Activated naive CD4-positive, alpha-beta T cell treated with anti-CD3 and anti-CD28 coated beads for 36 hours (primary cell): ENCODE measurements at regions of chr7 and their contacts with region 1.

Region 1: DNA sequence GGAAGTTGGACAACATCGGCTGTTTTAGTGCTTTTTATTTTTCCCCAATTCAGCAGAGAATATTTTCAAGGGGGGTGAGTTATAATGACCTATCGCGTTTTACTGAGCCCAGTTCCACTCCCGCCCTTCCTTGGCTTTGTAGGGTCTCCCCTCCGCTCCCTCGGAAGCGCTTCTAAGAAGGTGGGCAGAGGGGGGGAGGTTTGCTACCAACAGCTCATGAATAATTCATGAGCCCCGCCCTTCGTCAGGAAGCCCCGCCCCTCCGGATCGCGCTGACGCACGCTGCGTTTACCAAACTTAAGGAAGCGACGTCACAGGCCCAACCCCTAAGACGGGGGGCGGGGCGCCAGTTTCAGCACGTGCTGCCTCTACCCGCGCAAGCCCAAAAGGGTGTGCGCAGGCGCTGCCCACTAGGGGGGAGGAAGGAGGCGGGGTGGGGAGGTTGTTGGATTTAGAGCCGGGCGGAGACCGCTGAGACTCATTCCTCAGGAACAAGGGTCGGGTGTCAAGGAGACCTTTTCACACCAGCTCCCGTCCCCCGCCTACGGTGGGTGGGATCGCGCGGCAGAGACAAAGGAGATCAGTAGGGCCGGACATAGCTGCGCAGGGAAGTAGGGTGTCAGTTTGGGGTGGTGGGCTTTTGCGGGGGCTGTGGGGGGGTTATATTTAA is 529 bp upstream of the MEPCE start:
- DNase-seq: peak; percentile 100
- H3K4me3 Mint-ChIP-seq: peak overlapping the region; percentile 93
- H3K27ac Mint-ChIP-seq: peak overlapping the region; percentile 99
- H3K4me1 Mint-ChIP-seq: peaks cover 47% of the 10 kb centered on the region
- H3K27me3 Mint-ChIP-seq: peaks cover 5% of the 10 kb centered on the region

Region 2: GRCh38 chr7:99143853-99144672 is 1285.0 kb before region 1 on chr7 and contains the start of gene SMURF1:
- CTCF ChIA-PET with region 1: no interaction called
- intact Hi-C with region 1: loop called (anchors 5 kb)
- DNase-seq: peak; percentile 69
- H3K4me3 Mint-ChIP-seq: peak within 1 kb of the TSS; percentile 90
- H3K27ac Mint-ChIP-seq: peak within 1 kb of the TSS; percentile 75
- H3K4me1 Mint-ChIP-seq: peaks cover 38% of the 10 kb centered on the region
- H3K27me3 Mint-ChIP-seq: no peaks in the 10 kb centered on the region
- total RNA-seq, gene SMURF1: 10.1 to 11.1 TPM

Region 3: GRCh38 chr7:100081535-100082102 is 347.5 kb before region 1 on chr7 and contains the start of gene ZNF3:
- CTCF ChIA-PET with region 1: no interaction called
- intact Hi-C with region 1: loop called (anchors 5 kb)
- DNase-seq: peak; percentile 99
- H3K4me3 Mint-ChIP-seq: peak within 1 kb of the TSS; percentile 88
- H3K27ac Mint-ChIP-seq: peak within 1 kb of the TSS; percentile 86
- H3K4me1 Mint-ChIP-seq: peaks cover 29% of the 10 kb centered on the region
- H3K27me3 Mint-ChIP-seq: no peaks in the 10 kb centered on the region
- total RNA-seq, gene ZNF3: 13.1 to 14.0 TPM

Region 4: DNA sequence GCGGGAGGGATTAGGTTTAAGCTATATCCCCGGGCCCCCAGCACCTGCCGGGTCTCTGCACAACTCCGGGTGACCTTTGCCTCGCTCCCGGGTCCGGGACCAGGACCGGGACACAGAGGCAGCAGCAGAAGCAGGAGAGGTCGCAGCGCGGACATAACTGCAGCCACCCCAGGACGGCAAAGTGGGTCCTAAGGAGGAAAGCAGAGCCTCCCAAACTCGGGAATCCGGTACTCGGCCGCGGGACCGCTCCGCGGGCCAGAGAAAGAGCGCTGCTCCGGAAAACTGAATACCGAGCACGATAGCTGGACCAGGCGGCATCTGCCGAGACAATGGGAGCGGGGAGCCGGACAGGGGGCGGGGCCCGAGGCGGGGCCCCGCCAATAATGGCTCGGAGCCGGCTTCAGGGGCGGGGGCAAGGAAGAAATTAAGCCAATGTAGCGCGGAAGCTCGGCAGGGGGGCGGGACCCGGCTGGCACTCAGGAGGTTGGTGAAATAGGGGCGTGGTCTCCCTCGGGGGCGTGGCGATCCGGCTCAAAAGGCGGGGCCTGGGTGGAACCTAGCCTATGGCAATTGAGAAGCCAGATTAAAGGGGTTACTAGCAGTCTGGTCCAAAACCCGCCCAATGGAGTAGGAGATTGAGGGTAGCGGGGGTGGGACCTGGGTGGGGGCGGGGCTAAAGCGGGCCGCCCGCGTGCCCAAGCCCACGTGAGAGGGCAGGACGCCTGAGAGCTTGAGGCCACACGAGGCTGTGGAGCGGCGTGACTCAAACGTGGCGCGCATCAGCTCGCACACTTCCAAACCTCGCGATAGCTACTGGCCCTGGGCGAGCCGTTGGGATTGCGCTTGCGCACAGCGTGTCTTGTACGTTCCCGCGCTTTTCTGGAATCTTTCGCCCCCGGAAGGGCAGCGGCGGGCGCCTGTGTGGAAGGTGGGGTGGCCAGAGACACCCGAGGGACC is 251.8 kb before region 1 on chr7 and contains the starts of genes GPC2 and STAG3:
- CTCF ChIA-PET with region 1: no interaction called
- intact Hi-C with region 1: loop called (anchors 2 kb)
- DNase-seq: peak; percentile 99
- H3K4me3 Mint-ChIP-seq: peak within 1 kb of the TSS; percentile 80
- H3K27ac Mint-ChIP-seq: peak within 1 kb of the TSS; percentile 30
- H3K4me1 Mint-ChIP-seq: peaks cover 43% of the 10 kb centered on the region
- H3K27me3 Mint-ChIP-seq: no peaks in the 10 kb centered on the region
- total RNA-seq, gene GPC2: 7.6 to 9.5 TPM
- total RNA-seq, gene STAG3: 38.4 to 41.0 TPM

Region 5: GRCh38 chr7:100455206-100455605 is 26.1 kb after region 1 on chr7:
- CTCF ChIA-PET with region 1: no interaction called
- intact Hi-C with region 1: no loop called
- DNase-seq: no peak
- H3K4me3 Mint-ChIP-seq: no peak overlapping the region
- H3K27ac Mint-ChIP-seq: no peak overlapping the region
- H3K4me1 Mint-ChIP-seq: peaks cover 27% of the 10 kb centered on the region
- H3K27me3 Mint-ChIP-seq: no peaks in the 10 kb centered on the region

Region 6: GRCh38 chr7:100538654-100539435 is 109.7 kb after region 1 on chr7 and contains the start of gene AGFG2:
- CTCF ChIA-PET with region 1: no interaction called
- intact Hi-C with region 1: loop called (anchors 2 kb)
- DNase-seq: peak; percentile 100
- H3K4me3 Mint-ChIP-seq: peak within 1 kb of the TSS; percentile 97
- H3K27ac Mint-ChIP-seq: peak within 1 kb of the TSS; percentile 91
- H3K4me1 Mint-ChIP-seq: peaks cover 39% of the 10 kb centered on the region
- H3K27me3 Mint-ChIP-seq: no peaks in the 10 kb centered on the region
- total RNA-seq, gene AGFG2: 23.4 to 23.9 TPM

Region 7: DNA sequence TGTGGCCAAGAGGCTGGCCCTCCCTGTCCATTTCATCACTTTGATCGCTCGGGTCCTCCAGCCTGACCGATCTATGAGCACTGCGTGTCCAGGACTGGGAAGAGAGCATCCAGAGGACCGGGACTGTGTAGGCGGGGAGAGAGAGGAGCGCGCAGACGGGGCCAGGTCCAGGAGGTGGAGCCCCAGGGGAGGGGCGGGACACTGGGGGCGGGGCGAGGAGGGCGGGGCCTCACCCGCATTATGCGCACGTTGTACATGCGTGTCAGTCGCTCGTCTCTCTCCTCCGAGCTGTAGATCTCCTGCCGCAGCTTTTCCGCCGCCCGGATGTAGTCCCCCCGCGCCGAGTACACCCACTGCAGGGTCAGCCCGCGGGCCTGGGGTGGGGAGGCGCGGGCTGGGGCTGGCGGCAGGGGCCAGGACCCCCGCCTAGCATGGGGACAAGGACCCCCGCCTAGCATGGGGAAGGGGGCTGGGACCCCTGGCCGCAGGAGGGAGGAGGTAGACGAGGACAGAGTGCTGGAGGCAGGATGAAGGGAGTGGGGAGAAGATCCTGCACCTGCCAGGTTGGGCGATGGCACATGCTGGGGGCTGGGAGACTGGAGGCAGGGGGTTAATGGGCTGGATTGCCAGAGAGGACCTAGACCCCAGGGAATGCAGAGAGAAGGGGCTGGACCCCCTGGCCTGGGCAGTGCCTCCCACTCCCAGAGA is 197.6 kb after region 1 on chr7:
- CTCF ChIA-PET with region 1: no interaction called
- intact Hi-C with region 1: loop called (anchors 1 kb)
- DNase-seq: peak; percentile 91
- H3K4me3 Mint-ChIP-seq: peak overlapping the region; percentile 66
- H3K27ac Mint-ChIP-seq: peak overlapping the region; percentile 24
- H3K4me1 Mint-ChIP-seq: peaks cover 24% of the 10 kb centered on the region
- H3K27me3 Mint-ChIP-seq: no peaks in the 10 kb centered on the region